ENCODE measurements at regions of chr9 and their contacts with region 1.

Region 1: DNA sequence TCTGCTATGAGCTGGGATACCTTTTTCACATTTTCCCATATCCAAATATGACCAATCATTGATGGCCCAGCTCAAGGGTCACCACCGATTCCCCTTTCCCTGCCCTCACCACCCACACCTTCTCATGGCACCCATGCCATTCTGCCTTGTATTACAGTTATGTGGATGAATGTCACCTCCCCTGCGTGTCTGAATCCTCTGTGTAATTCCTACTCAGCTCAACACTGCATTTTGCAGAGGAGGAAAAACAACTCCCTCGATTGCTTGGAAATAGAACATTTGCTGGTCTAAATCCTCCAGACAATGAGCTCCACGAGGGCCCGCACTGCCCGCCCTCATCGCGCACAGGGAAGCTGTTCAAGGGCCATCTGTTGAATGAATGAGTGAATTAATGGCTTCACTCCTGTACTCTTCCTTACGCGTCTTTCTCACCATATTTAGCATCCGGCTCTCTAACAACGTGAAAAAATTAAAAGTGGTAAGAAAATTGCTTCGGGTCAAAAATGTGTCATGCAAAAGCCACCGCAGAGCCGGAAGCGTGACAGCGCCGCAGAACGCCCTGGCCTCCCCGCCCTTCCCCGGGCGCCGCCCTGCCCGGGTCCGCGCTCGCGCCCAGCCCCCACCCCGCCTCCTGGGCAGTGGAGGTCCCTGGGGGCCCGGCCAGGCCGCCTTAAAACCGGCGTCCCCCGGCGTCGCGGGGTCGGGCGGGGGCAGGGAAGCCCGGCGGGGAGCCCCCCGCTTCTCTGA is 706 bp downstream of the SUSD1 start:
- DNase-seq: peak; percentile 80
- H3K4me3 Mint-ChIP-seq: peak overlapping the region; percentile 85
- H3K27ac Mint-ChIP-seq: peak overlapping the region; percentile 94
- H3K4me1 Mint-ChIP-seq: peaks cover 54% of the 10 kb centered on the region
- H3K27me3 Mint-ChIP-seq: no peaks in the 10 kb centered on the region

Region 2: GRCh38 chr9:112097712-112098688 is 76.4 kb before region 1 on chr9:
- intact Hi-C with region 1: loop called (anchors 5 kb)
- DNase-seq: peak; percentile 59
- H3K4me3 Mint-ChIP-seq: no peak overlapping the region
- H3K27ac Mint-ChIP-seq: no peak overlapping the region
- H3K4me1 Mint-ChIP-seq: peaks cover 27% of the 10 kb centered on the region
- H3K27me3 Mint-ChIP-seq: no peaks in the 10 kb centered on the region

Region 3: GRCh38 chr9:112135706-112136105 is 38.7 kb before region 1 on chr9:
- intact Hi-C with region 1: no loop called
- DNase-seq: no peak
- H3K4me3 Mint-ChIP-seq: no peak overlapping the region
- H3K27ac Mint-ChIP-seq: no peak overlapping the region
- H3K4me1 Mint-ChIP-seq: peaks cover 2% of the 10 kb centered on the region
- H3K27me3 Mint-ChIP-seq: no peaks in the 10 kb centered on the region

Region 4: DNA sequence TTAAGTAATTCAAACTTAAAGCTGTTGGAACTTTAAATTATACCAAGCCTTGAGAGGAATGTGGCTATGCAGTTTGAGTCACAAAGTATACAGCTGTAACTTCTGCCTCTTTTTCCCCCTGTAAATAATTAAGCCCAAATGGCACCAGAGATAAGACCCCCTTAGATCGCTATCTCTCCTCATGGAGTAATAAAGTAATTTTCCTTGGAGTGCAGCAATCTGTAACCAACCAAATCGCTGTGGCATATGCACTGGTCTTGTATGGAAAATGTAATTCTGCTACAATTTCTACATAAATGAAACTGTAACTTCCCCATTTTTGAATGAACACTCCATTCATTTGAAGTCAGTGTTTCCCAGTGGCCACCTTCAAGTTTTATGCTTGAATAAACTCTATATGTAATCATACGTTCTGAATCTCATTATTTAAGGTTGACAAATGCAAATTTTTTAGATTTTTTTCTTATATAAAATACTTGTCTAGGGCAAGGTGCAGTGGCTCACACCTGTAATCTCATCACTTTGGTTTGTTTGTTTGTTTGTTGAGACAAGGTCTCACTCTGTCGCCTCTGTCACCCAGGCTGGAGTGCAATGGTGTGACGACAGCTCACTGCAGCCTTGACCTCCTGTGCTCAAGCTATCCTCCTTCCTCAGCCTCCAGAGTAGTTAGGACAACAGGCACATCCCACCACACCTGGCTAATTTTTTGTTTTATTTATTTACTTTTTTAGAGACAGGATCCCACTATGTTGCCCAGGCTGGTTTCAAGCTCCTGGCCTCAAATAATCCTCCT is 11.6 kb before region 1 on chr9:
- intact Hi-C with region 1: no loop called
- DNase-seq: no peak
- H3K4me3 Mint-ChIP-seq: no peak overlapping the region
- H3K27ac Mint-ChIP-seq: no peak overlapping the region
- H3K4me1 Mint-ChIP-seq: peaks cover 9% of the 10 kb centered on the region
- H3K27me3 Mint-ChIP-seq: no peaks in the 10 kb centered on the region

Region 5: GRCh38 chr9:112249277-112249676 is 74.9 kb after region 1 on chr9:
- intact Hi-C with region 1: loop called (anchors 2 kb)
- DNase-seq: no peak
- H3K4me3 Mint-ChIP-seq: no peak overlapping the region
- H3K27ac Mint-ChIP-seq: peak overlapping the region; percentile 34
- H3K4me1 Mint-ChIP-seq: peaks cover 26% of the 10 kb centered on the region
- H3K27me3 Mint-ChIP-seq: no peaks in the 10 kb centered on the region

Measured in activated T-helper 2 cell treated with anti-CD3 and anti-CD28 coated beads, Interferon-gamma antibody, Interleukin-2, Interleukin-4, amounts not matched to agents 10 μg/mL and 5 μg/mL and 100 μg/mL, durations not matched to agents 14 hours and 24 hours and 36 hours (primary cell).